Mammary epithelial cell (primary cell): ENCODE measurements at regions of chr15 and their contacts with region 1.

Region 1: DNA sequence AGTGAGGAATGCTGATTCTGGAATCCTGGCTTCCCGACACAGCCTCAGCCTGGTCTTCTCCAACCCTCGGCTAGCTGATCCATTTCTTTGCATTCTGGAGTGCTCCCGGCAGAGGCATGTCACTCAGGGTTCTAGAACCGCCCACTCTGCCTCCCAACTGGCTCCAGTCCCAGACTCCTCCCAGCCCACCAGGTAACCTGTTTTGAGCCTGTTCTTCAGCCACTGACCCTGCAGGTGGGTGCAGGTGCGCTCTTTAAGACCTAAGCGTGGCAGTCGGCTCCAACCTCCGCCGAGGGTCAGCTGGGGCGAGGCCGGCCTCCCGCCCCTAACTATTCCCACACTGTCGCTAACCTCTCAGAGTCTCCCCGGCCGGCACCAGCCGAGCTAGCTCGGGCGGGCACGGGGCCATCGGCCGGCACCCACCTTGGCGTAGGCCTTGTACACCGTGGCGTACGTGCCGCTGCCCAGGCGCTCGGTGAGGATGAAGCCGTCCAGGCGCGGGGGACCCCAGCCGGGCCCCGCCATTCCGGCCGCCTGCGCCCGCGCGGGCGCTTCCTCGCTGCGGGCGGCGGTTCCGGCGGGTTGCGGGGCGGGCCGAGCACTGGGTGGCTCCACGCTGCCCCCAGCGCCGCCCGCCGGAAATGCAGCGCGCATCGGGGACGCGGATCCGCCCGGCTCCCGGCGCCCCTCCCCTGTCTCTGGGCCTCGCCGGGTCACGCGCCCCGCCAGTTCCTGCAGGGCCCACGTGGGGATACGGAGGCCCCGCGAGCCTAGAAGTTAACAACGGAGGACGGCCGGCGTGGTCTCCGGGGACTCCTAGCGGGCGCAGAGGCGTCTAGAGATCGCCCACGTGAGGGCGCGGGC is at the start of gene ULK3:
- DNase-seq: peak; percentile 82
- H3K4me3 ChIP-seq: peak within 1 kb of the TSS; percentile 78 to 98 (median 89)
- H3K27ac ChIP-seq: peak within 1 kb of the TSS; percentile 49
- H3K4me1 ChIP-seq: peaks cover 8% of the 10 kb centered on the region
- H3K27me3 ChIP-seq: no peaks in the 10 kb centered on the region
- CTCF ChIP-seq: peak; percentile 39 to 56
- total RNA-seq, gene ULK3: 20.0 to 26.3 TPM

Region 2: DNA sequence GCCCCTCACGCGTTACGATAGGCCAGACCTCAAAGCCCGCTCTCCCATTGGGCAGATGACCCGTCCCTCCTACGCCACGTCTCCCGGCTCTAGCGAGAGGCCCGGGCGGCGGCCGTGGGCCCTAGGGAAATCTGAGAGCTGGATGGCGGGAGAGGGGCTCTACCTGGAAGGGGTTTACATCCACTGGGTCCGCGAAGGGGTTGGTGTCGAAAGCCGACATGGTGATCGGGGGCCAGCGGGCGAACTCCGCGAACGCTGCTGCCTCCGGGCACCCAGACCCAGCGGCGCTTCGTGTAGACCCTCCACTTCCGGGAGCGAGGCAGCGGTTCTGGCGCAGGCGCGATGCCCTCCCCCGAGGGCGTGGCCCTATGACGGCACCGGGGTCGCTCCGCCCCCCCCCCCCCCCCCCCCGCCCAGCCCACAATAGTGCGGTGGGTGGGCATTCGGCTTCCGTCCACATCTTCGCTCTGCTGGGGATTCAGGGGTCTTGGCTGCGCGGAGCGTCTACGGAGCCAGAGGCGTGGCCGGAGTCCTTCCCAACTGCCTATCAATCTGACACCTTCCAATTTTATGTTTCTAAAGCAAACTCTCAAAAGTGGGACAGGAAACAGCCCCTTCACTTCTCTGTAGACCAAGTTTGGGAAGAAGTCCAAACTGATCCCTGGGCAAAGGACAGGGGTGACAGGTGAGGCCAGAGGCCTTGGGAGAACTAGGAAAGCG is 30.4 kb after region 1 on chr15 and contains the start of gene SCAMP2:
- CTCF ChIA-PET with region 1: interaction called, 8 read pairs
- dilution Hi-C with region 1: no loop called
- in situ Hi-C with region 1: no loop called
- intact Hi-C with region 1: loop called (anchors 1 kb)
- DNase-seq: peak; percentile 93
- H3K4me3 ChIP-seq: peak within 1 kb of the TSS; percentile 65 to 93 (median 70)
- H3K27ac ChIP-seq: peak within 1 kb of the TSS; percentile 84
- H3K4me1 ChIP-seq: peaks cover 29% of the 10 kb centered on the region
- H3K27me3 ChIP-seq: no peaks in the 10 kb centered on the region
- CTCF ChIP-seq: no peak
- total RNA-seq, gene SCAMP2: 36.5 to 52.6 TPM